Caco-2 (cell line): ENCODE measurements at regions of chr22 and their contacts with region 1.

Region 1: GRCh38 chr22:50562523-50563412 is at the start of gene SYCE3:
- DNase-seq: peak; percentile 97 to 99
- H3K4me3 ChIP-seq: peak within 1 kb of the TSS; percentile 63
- H3K4me3 Mint-ChIP-seq: peak within 1 kb of the TSS; percentile 86
- H3K27ac Mint-ChIP-seq: peak within 1 kb of the TSS; percentile 87
- H3K4me1 ChIP-seq: no peaks in the 10 kb centered on the region
- H3K4me1 Mint-ChIP-seq: peaks cover 14% of the 10 kb centered on the region
- H3K27me3 ChIP-seq: no peaks in the 10 kb centered on the region
- H3K27me3 Mint-ChIP-seq: no peaks in the 10 kb centered on the region
- CTCF ChIP-seq: peak; percentile 85 to 87
- total RNA-seq, gene SYCE3: not detected in 2 replicates

Region 2: GRCh38 chr22:50507991-50508884 is 54.5 kb before region 1 on chr22 and contains the start of gene NCAPH2:
- CTCF ChIA-PET with region 1: interaction called, 15 read pairs
- POLR2A ChIA-PET with region 1: interaction called, 11 read pairs
- intact Hi-C with region 1: no loop called
- DNase-seq: peak; percentile 95 to 96
- H3K4me3 ChIP-seq: peak within 1 kb of the TSS; percentile 91
- H3K4me3 Mint-ChIP-seq: peak within 1 kb of the TSS; percentile 93
- H3K27ac Mint-ChIP-seq: peak within 1 kb of the TSS; percentile 90
- H3K4me1 ChIP-seq: peaks cover 5% of the 10 kb centered on the region; the same call in 1 of the 2 replicates
- H3K4me1 Mint-ChIP-seq: peaks cover 11% of the 10 kb centered on the region
- H3K27me3 ChIP-seq: no peaks in the 10 kb centered on the region
- H3K27me3 Mint-ChIP-seq: no peaks in the 10 kb centered on the region
- CTCF ChIP-seq: no peak
- total RNA-seq, gene NCAPH2: 84.3 and 88.9 TPM in 2 replicates

Region 3: DNA sequence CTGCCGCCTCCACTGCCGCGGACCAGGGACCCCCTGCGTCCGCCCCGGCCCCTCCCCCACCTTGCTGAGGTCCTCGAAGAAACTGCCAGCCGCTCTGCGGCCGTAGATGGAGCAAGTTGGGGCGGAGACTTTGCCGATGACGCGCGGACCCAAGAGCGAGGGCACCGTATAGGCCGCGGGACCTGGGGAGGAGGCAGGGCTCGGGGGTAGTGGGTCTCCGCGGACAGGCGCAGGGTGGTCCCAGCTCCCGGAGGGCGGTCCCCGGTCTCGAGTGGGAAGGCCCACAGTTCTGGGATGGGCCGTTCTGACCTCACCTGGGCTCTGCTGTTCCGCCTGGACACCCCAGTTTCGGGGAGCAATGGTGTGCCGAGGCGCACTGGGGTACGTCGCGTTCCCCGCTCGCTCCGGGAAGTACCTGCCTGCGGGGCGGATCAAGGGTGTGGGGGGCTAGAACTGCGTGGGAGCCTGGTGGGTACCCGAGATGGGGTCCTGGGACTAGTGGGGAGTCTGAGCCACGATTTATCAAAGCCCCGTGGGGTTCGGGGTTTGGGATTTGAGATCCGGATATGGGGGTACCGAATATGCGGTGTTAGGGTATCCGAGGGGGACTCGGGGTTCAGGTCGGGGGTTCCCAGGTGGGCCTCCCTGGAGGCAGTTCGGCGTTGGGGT is 31.8 kb before region 1 on chr22:
- CTCF ChIA-PET with region 1: interaction called, 43 read pairs
- POLR2A ChIA-PET with region 1: interaction called, 12 read pairs
- intact Hi-C with region 1: loop called (anchors 2 kb)
- DNase-seq: peak; percentile 80 to 82
- H3K4me3 ChIP-seq: peak overlapping the region; percentile 68
- H3K4me3 Mint-ChIP-seq: peak overlapping the region; percentile 81
- H3K27ac Mint-ChIP-seq: peak overlapping the region; percentile 86
- H3K4me1 ChIP-seq: peaks cover 37% of the 10 kb centered on the region
- H3K4me1 Mint-ChIP-seq: peaks cover 31% of the 10 kb centered on the region
- H3K27me3 ChIP-seq: no peaks in the 10 kb centered on the region
- H3K27me3 Mint-ChIP-seq: no peaks in the 10 kb centered on the region
- CTCF ChIP-seq: no peak

Region 4: DNA sequence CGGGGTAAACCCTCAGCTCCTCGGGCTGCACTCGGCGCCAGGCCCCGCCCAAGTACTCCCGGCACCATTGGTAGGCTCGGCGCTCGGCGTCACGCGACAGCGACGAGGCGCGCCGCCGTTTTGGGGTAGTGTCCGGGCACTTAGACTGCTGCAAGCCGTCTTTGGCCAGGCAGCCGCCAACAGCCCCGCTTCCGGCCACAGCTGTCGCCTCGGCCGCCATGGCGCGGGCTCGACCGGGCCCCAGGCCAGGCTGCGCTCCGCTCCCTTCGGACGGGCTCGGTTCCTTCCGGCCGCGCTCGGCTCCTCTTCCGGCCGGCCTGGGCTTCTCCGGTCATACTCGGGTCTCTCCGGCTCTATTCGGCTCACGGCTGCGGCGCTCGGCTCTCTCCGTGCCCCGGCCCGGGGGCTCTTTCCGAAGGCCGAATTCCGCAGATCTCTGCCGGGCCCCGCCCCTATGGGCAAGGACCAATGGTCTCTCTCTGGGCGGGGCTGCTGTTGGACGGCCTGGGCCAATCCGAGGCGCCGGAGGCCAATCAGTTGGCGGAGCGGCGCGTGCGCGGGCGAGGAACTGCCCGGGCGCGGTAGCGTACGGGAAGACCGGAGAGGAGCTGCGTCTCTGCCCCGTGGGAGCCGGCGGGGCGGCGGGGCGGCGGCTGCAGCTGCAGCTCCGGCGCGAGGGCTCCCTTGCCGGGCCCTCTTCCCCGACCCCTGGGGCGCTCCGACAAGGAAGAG is 20.0 kb after region 1 on chr22 and contains the start of gene CHKB:
- CTCF ChIA-PET with region 1: interaction called, 8 read pairs
- POLR2A ChIA-PET with region 1: interaction called, 4 read pairs
- intact Hi-C with region 1: loop called (anchors 1 kb)
- DNase-seq: peak; percentile 97 to 99
- H3K4me3 ChIP-seq: peak within 1 kb of the TSS; percentile 69
- H3K4me3 Mint-ChIP-seq: peak within 1 kb of the TSS; percentile 78
- H3K27ac Mint-ChIP-seq: peak within 1 kb of the TSS; percentile 97
- H3K4me1 ChIP-seq: peaks cover 23% of the 10 kb centered on the region
- H3K4me1 Mint-ChIP-seq: no peaks in the 10 kb centered on the region
- H3K27me3 ChIP-seq: no peaks in the 10 kb centered on the region
- H3K27me3 Mint-ChIP-seq: no peaks in the 10 kb centered on the region
- CTCF ChIP-seq: no peak
- total RNA-seq, gene CHKB: 43.3 and 45.4 TPM in 2 replicates

Region 5: DNA sequence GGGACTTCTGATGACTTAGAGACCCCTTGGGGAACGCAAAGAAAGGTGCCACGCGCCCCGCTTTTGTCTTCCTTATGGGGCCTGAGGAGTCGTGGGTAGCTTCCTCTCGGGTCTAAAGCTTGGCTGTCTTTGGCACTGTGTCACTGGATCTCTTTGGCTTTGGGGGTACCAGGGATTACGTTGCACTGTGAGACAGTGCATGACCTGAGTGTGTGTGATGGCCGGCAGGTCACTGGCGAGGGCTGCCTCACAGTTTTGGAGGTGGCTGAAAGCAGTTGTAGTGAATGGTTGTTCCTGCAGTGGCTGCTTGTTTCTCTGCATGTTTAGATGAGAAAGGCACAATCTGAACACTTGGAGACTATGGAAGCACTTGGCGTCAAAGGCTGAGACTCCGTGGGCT is 71.0 kb after region 1 on chr22:
- CTCF ChIA-PET with region 1: no interaction called
- POLR2A ChIA-PET with region 1: no interaction called
- intact Hi-C with region 1: no loop called
- DNase-seq: no peak
- H3K4me3 ChIP-seq: no peak overlapping the region
- H3K4me3 Mint-ChIP-seq: no peak overlapping the region
- H3K27ac Mint-ChIP-seq: no peak overlapping the region
- H3K4me1 ChIP-seq: peaks cover 3% of the 10 kb centered on the region
- H3K4me1 Mint-ChIP-seq: peaks cover 4% of the 10 kb centered on the region
- H3K27me3 ChIP-seq: no peaks in the 10 kb centered on the region
- H3K27me3 Mint-ChIP-seq: no peaks in the 10 kb centered on the region
- CTCF ChIP-seq: no peak